ENCODE measurements at regions of chr21 and their contacts with region 1.

Region 1: DNA sequence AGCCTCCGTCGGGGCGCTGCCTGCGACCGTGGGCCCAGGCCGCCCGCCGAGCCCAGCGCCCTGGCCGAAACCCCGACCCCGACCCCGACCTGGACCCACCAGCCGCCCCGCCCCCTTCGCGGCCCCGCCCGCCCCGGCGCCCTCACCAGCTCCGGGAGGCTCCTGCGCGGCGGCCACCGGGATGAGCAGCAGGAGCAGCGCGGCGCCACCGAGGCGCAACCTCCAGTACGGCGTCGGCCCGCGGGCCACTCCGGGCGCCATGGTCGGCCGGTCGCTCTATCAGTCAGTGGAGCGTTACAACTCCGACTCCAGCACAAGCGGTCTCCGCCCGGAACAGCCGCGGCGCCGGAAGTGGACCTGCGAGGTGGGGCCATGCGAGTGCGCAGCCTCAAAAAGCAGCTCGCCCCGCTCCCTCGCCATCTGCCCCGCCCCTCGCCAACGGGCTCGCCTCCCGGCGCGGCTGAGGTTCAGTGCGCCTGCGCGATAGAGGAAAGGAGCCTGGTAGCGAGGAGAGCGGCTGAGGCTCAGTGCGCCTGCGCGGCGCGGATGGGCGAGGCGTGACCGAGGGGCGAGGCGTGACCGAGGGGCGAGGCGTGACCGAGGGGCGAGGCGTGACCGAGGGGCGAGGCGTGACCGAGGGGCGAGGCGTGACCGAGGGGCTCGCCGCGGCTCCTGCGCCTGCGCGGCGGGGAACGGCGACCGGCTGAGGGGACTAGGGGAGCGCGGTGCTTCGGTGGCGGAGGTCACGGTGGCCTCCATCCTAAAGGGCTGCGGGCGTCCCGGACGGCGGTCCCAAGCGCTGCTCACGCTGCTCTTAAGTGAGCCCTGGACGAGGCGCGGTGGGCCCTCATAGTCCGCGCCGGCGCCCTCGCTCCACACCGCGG is at the start of gene PTTG1IP:
- DNase-seq: peak; percentile 99
- H3K4me3 Mint-ChIP-seq: peak within 1 kb of the TSS; percentile 91
- H3K27ac Mint-ChIP-seq: peak within 1 kb of the TSS; percentile 82
- H3K4me1 Mint-ChIP-seq: peaks cover 43% of the 10 kb centered on the region
- H3K27me3 Mint-ChIP-seq: no peaks in the 10 kb centered on the region
- total RNA-seq, gene PTTG1IP: 37.6 to 38.5 TPM

Region 2: GRCh38 chr21:44510508-44511210 is 362.9 kb before region 1 on chr21:
- CTCF ChIA-PET with region 1: no interaction called
- intact Hi-C with region 1: loop called (anchors 5 kb)
- DNase-seq: peak; percentile 81
- H3K4me3 Mint-ChIP-seq: no peak overlapping the region
- H3K27ac Mint-ChIP-seq: no peak overlapping the region
- H3K4me1 Mint-ChIP-seq: peaks cover 5% of the 10 kb centered on the region
- H3K27me3 Mint-ChIP-seq: no peaks in the 10 kb centered on the region

Region 3: GRCh38 chr21:44773287-44773966 is 100.2 kb before region 1 on chr21:
- CTCF ChIA-PET with region 1: no interaction called
- intact Hi-C with region 1: no loop called
- DNase-seq: no peak
- H3K4me3 Mint-ChIP-seq: no peak overlapping the region
- H3K27ac Mint-ChIP-seq: no peak overlapping the region
- H3K4me1 Mint-ChIP-seq: no peaks in the 10 kb centered on the region
- H3K27me3 Mint-ChIP-seq: no peaks in the 10 kb centered on the region

Region 4: DNA sequence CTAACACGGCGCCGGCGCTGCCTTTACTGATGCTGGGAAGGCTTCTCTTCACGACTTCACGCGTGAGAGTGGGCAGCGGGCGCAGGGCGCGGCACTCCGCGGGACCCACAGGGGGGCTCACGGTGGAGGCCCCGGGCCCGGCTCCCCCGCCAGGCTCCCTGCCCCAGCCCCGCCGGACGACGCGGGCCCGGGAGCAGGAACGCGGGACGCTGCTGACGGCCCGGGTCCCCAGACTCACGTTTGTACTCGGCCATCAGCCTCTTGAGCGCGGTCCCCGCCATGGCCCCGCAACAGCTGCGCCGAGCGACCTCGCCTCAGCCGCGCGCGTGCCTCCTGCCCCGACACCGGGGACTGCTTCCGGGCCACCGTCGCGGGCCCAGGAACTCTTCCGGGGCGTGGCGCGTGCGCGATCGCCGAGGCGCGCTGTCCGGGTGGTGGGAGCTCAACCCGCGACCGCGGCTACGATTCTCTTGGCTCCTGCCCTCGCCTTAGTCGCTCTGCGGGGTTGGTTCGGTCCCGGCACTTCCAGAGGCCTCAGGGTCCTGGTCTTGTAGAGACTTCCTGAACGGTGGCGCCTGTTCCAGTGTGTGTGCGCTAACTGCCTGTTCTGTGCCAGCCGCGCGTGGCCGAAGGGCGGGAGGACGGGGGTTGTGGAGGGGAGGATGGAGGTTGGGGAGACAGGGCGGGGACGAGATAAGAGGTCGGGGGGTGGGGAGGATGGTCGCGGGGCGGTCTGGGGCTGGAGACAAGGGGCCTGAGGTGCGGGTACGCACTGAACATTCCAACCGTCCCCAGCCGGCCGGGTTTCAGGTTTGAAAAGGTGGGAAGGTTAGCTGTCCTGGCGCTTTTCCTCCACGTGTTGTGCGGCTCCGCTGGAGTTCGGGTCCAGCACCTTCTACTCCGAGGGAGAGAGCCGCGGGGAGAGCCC is 71.9 kb before region 1 on chr21 and contains the start of gene UBE2G2:
- CTCF ChIA-PET with region 1: interaction called, 34 read pairs
- intact Hi-C with region 1: loop called (anchors 1 kb)
- DNase-seq: peak; percentile 83
- H3K4me3 Mint-ChIP-seq: peak within 1 kb of the TSS; percentile 98
- H3K27ac Mint-ChIP-seq: peak within 1 kb of the TSS; percentile 83
- H3K4me1 Mint-ChIP-seq: peaks cover 58% of the 10 kb centered on the region
- H3K27me3 Mint-ChIP-seq: no peaks in the 10 kb centered on the region
- total RNA-seq, gene UBE2G2: 94.0 to 95.2 TPM

Region 5: DNA sequence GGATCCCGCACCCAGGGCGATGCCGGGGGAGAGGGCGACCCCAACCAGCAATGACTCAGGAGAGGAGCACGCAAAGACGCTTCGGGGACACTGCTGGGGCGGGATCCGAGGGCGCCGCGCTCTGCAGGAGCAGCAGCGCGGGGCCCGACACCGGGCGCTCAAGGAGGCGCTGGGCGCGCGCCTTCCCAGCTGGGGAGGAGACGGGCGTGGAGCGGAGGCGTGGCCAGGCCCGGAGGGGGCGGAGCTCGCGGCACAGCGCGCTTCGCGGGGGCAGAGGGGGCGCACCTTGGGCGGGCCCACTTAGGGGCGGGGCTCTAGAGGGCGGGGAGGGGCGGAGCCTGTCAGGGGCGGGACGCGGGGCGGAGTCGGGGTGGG is 56.1 kb before region 1 on chr21:
- CTCF ChIA-PET with region 1: no interaction called
- intact Hi-C with region 1: loop called (anchors 1 kb)
- DNase-seq: peak; percentile 95
- H3K4me3 Mint-ChIP-seq: peak overlapping the region; percentile 65
- H3K27ac Mint-ChIP-seq: no peak overlapping the region
- H3K4me1 Mint-ChIP-seq: peaks cover 15% of the 10 kb centered on the region
- H3K27me3 Mint-ChIP-seq: no peaks in the 10 kb centered on the region

Region 6: DNA sequence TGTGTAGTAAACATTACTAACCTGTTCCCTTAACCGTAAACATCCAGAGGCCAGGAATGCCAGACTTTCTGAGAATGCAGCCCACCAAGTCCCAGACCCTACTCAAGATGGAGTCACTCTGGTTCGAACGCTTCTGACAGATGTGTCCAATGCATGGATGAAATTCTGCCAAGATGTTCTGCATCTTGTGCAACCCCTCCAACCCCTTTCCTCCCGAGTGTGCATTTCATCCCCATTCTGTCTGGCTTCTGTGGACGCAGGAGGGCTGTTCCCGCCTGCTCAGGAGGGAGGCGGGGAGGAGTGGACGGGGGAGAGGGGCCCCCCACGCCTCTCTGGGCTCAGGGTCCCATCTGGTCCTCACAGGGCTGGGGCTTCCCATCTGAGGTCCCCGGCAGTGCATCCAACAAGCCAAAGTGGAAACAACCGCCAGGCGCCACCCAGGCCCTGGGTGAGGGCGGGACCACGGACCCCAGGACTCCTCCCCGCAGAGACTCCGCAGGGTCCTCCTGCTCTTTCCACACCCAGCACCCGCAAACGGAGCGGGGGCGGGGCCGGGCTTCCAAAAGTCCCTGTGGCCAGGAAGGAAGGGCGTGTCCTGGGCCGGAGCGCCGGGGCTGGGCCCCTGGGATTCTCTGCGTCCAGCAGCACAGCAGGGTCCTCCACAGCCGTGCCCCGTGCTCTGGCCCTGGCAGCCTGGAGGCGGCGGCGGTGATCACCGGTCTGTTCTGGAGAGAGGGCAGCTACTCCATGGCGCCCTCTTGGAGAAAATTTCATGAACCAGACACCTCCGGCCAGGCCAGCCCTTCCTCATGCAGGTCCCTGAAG is 28.0 kb before region 1 on chr21:
- CTCF ChIA-PET with region 1: interaction called, 3 read pairs
- intact Hi-C with region 1: loop called (anchors 1 kb)
- DNase-seq: peak; percentile 74
- H3K4me3 Mint-ChIP-seq: peak overlapping the region; percentile 68
- H3K27ac Mint-ChIP-seq: no peak overlapping the region
- H3K4me1 Mint-ChIP-seq: peaks cover 13% of the 10 kb centered on the region
- H3K27me3 Mint-ChIP-seq: no peaks in the 10 kb centered on the region

Region 7: GRCh38 chr21:44892536-44893277 is 19.1 kb after region 1 on chr21:
- CTCF ChIA-PET with region 1: interaction called, 19 read pairs
- intact Hi-C with region 1: no loop called
- DNase-seq: peak; percentile 85
- H3K4me3 Mint-ChIP-seq: no peak overlapping the region
- H3K27ac Mint-ChIP-seq: peak overlapping the region; percentile 75
- H3K4me1 Mint-ChIP-seq: peaks cover 7% of the 10 kb centered on the region
- H3K27me3 Mint-ChIP-seq: no peaks in the 10 kb centered on the region

Region 8: DNA sequence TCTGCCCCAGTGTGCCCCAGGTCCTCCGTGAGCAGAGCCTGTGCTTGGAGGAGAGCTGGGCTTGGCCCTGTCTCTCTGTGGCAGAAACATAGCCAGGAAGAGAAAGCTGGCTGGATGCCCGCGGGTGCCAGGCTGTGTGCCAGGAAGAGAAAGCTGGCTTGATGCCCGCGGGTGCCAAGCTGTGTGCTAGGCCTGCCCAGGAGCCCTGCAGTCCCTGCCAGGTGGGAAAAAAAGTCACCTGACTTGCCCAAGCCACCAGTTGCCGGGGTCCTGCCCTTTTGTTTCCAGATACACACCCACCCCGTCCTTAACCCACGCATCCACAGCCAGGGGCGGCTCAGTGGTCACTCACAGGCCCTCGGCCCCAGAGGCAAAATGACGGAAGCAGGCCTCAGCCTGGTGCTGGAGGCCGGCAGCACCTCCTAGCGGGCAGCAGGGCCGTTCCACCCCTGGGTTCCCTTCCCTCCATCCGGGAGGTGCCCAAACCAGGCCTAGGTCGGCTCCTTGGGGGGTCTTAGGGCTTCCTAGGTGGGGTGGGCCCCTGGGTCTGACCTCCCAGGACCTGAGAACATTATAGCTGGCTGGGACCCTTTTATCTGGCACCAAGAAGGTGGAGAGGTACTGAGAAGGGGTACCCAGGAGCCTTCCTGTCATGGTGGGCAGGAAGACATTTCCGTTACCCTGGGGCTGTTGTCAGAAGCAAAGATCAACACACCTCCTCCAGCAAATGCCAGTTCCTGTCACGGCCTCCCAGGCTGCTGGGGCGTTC is 38.0 kb after region 1 on chr21:
- CTCF ChIA-PET with region 1: interaction called, 4 read pairs
- intact Hi-C with region 1: loop called (anchors 2 kb)
- DNase-seq: peak; percentile 70
- H3K4me3 Mint-ChIP-seq: peak overlapping the region; percentile 57
- H3K27ac Mint-ChIP-seq: peak overlapping the region; percentile 93
- H3K4me1 Mint-ChIP-seq: peaks cover 78% of the 10 kb centered on the region
- H3K27me3 Mint-ChIP-seq: no peaks in the 10 kb centered on the region

Region 9: DNA sequence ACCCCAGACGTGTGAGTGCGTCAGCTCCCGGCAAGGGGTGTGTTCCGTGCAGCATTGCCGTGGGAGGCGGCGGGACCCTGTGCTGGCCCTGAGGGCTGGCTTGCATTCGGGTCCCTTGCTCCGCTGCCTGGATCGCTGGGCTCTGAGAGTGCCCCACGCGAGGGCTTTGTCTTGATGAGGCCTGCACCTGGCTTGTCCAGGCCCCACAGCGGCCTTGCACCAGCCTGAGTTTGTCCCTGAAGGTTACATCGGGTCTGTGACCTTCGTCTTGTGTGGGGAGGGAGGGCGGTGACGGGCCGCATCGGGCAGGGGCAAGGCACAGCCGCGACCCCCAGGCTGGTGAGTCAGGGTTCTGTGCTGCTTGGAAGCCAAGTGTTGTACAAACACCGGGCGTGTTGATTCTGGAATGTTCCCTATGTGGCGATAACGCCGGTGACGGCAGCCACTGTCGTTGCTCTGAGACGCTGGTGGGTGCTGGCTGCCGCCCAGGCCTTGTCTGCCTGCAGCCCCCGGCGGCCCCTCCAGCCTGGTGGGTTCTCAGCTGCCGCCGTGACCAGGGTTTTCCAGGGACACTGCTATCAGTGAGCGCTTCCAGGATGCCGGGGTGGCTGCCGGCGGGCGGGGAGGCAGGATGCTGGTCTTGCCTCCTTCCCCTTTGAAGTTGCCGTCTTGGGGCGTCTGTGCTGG is 109.1 kb after region 1 on chr21:
- CTCF ChIA-PET with region 1: no interaction called
- intact Hi-C with region 1: no loop called
- DNase-seq: no peak
- H3K4me3 Mint-ChIP-seq: no peak overlapping the region
- H3K27ac Mint-ChIP-seq: no peak overlapping the region
- H3K4me1 Mint-ChIP-seq: no peaks in the 10 kb centered on the region
- H3K27me3 Mint-ChIP-seq: no peaks in the 10 kb centered on the region